AG04449 (cell line): ENCODE measurements at regions of chr3 and their contacts with region 1.

Region 1: GRCh38 chr3:81581966-81582599 is 179.4 kb downstream of the GBE1 start:
- DNase-seq: no peak
- H3K4me3 ChIP-seq: no peak overlapping the region
- CTCF ChIP-seq: peak; percentile 70

Region 2: DNA sequence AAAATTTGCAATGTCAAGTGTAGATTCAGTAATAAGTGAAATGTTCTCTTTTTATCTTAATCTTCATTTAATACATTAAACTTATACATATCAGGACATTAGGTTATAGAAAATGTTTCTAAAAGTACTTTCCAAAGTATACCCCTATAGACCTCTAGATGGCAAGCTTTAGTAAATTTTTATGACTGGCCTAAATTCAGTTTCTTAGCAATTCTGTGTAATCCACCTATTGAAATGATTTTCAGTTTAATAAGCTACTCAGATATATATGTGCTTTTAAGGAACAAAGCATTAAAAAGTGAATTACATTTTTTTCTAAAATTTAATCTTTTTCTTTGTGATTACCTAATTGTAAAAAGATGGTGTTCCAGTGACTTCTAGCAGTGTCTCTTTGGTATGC is 162.9 kb before region 1 on chr3:
- CTCF ChIA-PET with region 1: interaction called, 17 read pairs
- POLR2A ChIA-PET with region 1: no interaction called
- DNase-seq: no peak
- H3K4me3 ChIP-seq: no peak overlapping the region
- CTCF ChIP-seq: peak; percentile 17

Region 3: DNA sequence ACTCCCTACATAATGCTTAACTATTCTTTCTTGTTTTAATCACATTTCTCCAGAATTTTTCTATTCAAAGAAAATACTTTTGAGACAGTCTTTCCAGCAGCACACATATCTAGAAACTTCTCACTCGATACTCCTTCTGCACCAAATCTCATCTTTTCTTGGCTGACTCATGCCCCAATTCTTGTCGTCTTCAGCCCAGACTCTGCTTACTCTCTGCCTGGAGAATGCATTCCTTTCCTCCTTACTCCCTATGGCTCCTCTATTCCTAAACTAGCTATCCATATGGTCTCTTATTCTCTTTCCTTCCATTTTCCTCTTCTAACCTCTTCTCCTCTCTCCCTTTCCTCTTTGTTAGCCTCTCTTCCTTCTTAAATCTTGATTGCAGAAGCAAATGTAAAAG is 20.7 kb after region 1 on chr3:
- CTCF ChIA-PET with region 1: interaction called, 34 read pairs
- POLR2A ChIA-PET with region 1: no interaction called
- DNase-seq: no peak
- H3K4me3 ChIP-seq: no peak overlapping the region
- CTCF ChIP-seq: no peak